HEK293 (cell line): ENCODE measurements at regions of chr4 and their contacts with region 1.

Region 1: DNA sequence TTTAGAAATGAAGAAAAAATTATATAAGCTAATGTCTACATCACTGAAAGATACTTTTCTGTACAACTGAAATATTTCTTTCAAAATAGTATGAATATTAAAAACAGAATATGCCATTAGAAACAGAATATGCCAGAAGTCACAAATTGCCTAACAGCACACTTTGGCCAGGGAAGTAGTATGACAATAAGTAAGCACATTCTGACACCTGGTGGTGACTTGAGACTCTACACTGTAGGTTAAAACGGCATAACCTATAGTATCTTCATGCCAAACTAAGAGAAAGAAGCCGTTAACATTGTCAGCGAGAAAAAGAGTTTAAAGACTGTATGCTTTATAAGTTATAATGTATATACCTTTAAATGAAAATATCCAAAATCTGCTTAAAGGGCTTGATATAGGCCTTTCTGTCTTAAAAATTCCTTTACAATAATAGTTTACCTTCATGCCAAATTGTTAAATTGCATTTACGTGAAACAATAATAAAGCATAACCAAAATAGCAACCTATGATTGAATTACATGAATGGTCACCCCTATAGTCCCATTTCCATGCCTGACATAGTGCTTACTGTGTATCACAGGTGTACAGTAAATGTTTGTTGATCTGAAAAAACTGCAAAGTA is 32.8 kb downstream of the FAM13A start:
- H3K4me3 ChIP-seq: no peak overlapping the region
- H3K27ac ChIP-seq: no peak overlapping the region
- H3K4me1 ChIP-seq: no peaks in the 10 kb centered on the region
- CTCF ChIP-seq: 0 out of 2 replicates have a peak, but pooled peaks have one; percentile 20

Region 2: DNA sequence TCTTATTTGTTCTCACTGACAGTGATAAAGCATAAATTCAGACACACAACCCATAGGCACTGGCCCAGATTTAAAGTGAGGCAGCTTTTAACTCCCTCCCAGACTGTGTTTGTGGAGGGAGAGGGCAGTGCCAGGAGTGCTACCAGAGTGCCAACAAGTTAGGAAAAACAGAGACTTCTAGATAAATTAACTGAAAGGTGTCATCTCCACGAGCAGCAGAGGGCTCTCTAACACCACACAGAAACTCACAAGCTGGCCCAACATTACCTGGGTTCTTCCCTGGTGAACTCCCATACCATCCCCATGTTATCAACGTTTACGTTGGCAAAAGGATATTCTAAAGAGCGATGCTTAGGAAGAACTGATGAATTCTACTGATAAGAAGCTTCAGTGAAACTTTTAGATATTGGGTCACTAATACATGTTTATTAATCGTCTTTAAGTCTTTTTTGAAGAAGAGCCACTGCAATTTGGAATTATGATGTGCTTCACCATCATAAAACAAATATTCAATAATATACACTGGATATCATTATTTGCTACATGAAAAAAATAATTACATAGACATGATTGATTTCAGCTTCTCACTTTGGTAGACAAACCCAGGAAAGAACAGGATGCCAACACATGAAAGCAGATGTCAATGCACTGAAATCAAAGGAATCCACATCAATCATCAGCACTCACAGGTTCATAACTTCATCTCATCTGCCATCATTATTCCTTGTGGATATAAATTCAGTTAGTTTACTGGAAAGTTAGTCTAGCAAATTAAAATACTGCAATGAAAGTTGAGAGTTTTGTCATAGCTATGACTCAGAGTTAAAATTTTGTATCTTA is 205.3 kb before region 1 on chr4:
- CTCF ChIA-PET with region 1: interaction called, 89 read pairs
- POLR2A ChIA-PET with region 1: no interaction called
- H3K4me3 ChIP-seq: no peak overlapping the region
- H3K27ac ChIP-seq: no peak overlapping the region
- H3K4me1 ChIP-seq: no peaks in the 10 kb centered on the region
- CTCF ChIP-seq: peak; percentile 43; the same call in 1 of the 2 replicates

Region 3: DNA sequence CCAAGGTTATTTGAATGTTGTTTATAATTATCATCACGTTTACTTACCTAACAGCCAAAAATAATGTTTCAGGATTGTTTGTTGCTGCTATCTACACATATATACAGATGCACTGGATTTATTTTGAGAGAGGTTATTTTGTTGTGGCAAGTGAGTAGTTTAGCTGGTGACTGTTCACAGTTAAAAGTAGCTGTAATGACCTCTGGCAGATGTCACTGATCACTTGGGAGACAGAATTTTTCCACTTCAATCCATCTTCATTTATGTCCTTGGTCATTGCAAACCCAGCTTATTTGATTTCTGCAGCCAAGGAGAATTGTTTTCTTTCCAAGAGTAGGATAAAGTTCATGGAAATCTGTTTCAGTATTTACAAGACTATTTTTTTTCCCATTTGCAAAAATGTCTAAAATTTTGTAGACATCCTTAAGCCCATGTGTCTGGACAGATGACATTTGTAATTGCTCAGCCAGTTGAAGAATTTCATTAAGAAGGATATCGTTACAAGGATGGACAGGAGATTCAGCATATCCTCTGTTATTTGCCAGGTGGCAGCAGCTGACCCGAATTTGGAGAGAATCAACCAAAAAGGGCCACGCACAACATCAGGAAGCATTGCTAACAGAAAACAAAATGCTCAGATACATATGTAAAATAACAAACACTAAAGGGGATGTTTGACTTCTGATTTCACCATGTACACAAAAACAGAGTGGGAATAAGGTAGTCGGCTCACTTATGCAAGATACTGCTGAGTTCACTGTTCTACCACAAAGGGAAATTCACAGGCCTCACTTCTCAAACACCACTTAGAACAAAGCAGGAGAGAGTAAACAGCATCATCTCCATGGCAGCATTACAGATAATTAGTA is 218.9 kb after region 1 on chr4:
- CTCF ChIA-PET with region 1: no interaction called
- POLR2A ChIA-PET with region 1: no interaction called
- H3K4me3 ChIP-seq: no peak overlapping the region
- H3K27ac ChIP-seq: no peak overlapping the region
- H3K4me1 ChIP-seq: no peaks in the 10 kb centered on the region
- CTCF ChIP-seq: no peak

Region 4: DNA sequence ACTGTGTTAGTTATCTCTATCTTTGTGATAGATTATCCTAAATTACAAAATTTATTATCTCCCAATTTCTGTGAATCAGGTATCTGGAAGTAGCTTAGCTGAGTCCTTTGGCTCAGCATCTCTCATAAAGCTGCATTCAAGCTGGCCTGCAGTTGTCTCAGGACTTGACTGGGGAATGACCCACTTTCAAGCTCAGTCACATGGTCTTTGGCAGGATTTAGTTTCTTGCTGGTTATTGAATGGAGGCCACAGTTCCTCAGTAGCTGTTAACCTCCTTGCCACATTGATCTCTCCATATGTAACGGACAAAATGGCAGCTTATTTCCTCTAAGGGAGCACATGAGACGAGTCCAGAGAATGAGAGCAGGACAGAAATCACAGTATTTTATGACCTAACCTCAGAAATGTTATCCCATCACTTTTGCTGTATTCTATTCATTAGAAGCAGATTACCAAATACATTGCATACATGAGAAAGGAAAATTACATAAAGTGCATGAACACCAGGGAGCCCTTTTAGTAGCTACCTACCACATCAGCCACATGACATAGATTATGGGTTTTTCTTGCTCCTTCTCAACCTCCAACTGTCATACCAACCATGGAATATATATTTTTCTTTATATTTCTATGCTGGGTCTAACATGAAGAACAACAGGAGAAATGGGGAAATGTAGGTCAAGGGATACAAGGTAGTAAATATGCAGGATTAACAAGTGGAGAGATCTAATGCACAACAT is 1833.1 kb after region 1 on chr4:
- CTCF ChIA-PET with region 1: no interaction called
- POLR2A ChIA-PET with region 1: no interaction called
- H3K4me3 ChIP-seq: no peak overlapping the region
- H3K27ac ChIP-seq: no peak overlapping the region
- H3K4me1 ChIP-seq: no peaks in the 10 kb centered on the region
- CTCF ChIP-seq: no peak